ENCODE measurements at regions of chr14 and their contacts with region 1.

Region 1: DNA sequence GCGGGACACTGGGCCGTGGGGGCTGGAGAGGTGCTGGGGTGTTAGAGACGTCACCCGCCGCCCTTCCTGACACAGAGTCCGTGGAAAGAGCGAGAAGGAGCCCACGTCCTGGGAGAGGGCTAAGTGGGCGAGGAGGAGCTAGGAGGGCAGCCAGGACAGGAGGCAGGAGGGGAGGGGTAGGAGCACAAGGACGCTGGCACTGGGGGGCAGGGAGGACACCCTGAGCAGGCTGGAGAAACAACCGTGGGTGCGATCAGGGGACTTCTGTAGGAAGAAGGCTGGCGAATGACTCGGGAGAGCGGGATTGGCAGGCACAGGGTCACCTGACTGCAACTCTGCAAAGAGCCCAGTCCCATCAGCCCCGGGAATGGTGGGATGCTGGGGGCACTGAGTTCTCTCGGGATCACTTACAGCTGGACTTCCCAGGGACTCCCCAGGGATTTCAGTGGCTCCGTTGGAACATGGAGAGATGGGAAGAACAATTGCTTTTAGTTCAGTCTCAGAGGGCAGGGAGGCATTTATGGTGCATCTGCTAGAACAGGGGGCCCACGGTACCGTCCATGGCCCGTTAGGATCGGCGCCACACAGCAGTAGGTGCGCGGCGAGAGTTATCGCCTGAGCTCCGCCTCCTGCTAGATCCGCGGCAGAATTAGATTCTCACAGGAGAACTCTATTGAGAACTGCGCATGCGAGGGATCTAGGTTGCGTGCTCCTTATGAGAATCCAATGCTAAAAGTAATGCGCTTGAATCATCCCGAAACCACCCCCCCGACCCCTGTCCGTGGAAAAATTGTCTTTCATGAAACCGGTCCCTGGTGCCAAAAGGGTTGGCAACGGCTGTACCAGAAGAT is 24.3 kb downstream of the UBR7 start:
- DNase-seq: peak; percentile 21 to 25
- ATAC-seq: peak; percentile 46 to 78 (median 68)
- H3K4me3 ChIP-seq: peak overlapping the region; percentile 7 to 62 (median 52)
- H3K27ac ChIP-seq: no peak overlapping the region
- H3K4me1 ChIP-seq: peaks cover 0 to 14% (median 6%) of the 10 kb centered on the region in 9 donors
- H3K27me3 ChIP-seq: peaks cover 0 to 4% (median 0%) of the 10 kb centered on the region in 7 donors
- CTCF ChIP-seq: no peak

Region 2: GRCh38 chr14:93332853-93333630 is 101.7 kb after region 1 on chr14 and contains the start of gene BTBD7:
- intact Hi-C with region 1: loop called in 1 of 10 experiments (anchors 10 kb)
- DNase-seq: peak; percentile 95 to 96
- ATAC-seq: peak; percentile 98 to 100 (median 98)
- H3K4me3 ChIP-seq: peak within 1 kb of the TSS; percentile 61 to 92 (median 84)
- H3K27ac ChIP-seq: peak within 1 kb of the TSS; percentile 88 to 99 (median 98)
- H3K4me1 ChIP-seq: peaks cover 0 to 40% (median 35%) of the 10 kb centered on the region in 9 donors
- H3K27me3 ChIP-seq: no peaks in the 10 kb centered on the region
- CTCF ChIP-seq: peak in 6 of 9 donors; percentile 5 to 51 (median 24)
- total RNA-seq, gene BTBD7: 12.7 to 33.6 (median 23.7) TPM

Region 3: GRCh38 chr14:93533472-93534241 is 302.3 kb after region 1 on chr14:
- intact Hi-C with region 1: loop called in 1 of 10 experiments (anchors 10 kb)
- DNase-seq: no peak
- ATAC-seq: peak in 5 of 8 donors; percentile 42 to 53 (median 47)
- H3K4me3 ChIP-seq: no peak overlapping the region
- H3K27ac ChIP-seq: no peak overlapping the region
- H3K4me1 ChIP-seq: peaks cover 0 to 15% (median 0%) of the 10 kb centered on the region in 9 donors
- H3K27me3 ChIP-seq: peaks cover 0 to 6% (median 0%) of the 10 kb centered on the region in 7 donors
- CTCF ChIP-seq: no peak

Region 4: GRCh38 chr14:93629643-93630042 is 398.3 kb after region 1 on chr14:
- intact Hi-C with region 1: loop called in 2 of 10 experiments (anchors 10 kb)
- DNase-seq: no peak
- ATAC-seq: no peak
- H3K4me3 ChIP-seq: no peak overlapping the region
- H3K27ac ChIP-seq: no peak overlapping the region
- H3K4me1 ChIP-seq: no peaks in the 10 kb centered on the region
- H3K27me3 ChIP-seq: peaks cover 0 to 9% (median 0%) of the 10 kb centered on the region in 7 donors
- CTCF ChIP-seq: no peak

Measured in heart right ventricle (tissue), 16 donors.